ENCODE measurements at regions of chr4 and their contacts with region 1.

Region 1: DNA sequence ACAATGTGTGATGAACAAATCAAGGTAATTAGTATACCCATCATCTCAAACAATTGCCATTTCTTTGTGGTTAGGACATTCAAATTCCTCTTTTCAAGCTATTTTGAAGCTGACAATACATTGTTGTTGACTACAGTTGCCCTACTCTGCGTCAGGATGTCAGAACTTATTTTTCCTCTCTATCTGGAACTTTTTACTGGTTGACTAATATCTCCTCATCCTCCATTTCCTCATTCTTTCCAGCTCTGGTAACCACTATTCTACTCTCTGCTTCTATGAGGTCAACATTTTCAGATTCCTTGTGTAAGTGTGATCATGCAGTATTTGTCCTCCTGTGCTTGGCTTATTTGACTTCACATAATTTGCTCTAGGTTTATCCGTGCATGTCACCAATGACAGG is 240.5 kb upstream of the HS3ST1 start:
- DNase-seq: no peak
- H3K4me3 ChIP-seq: no peak overlapping the region
- H3K27ac ChIP-seq: no peak overlapping the region
- H3K4me1 ChIP-seq: no peaks in the 10 kb centered on the region
- H3K27me3 ChIP-seq: no peaks in the 10 kb centered on the region

Region 2: DNA sequence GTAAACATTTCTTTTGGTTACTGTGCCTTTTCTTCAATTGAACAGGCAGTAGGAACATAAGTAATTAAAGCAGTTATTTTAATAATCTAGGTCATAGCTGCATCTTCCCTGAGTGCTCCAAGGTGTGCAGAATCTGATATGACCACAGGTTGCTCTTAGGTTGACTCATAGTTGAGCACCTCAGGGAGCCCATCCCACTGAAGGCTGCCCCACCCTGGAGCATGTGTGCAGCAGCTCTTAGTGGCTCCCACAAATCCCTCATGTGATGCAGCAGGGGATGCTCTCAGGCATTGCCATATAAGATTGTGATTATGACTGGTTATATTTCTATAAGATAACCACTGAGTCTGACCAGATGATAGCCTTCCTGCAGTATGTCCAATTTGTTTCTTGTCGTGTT is 1284.2 kb before region 1 on chr4:
- CTCF ChIA-PET with region 1: no interaction called
- POLR2A ChIA-PET with region 1: interaction called, 10 read pairs
- DNase-seq: no peak
- H3K4me3 ChIP-seq: no peak overlapping the region
- H3K27ac ChIP-seq: no peak overlapping the region
- H3K4me1 ChIP-seq: no peaks in the 10 kb centered on the region
- H3K27me3 ChIP-seq: peaks cover 0 to 1% (median 0%) of the 10 kb centered on the region in 5 experiments

Region 3: DNA sequence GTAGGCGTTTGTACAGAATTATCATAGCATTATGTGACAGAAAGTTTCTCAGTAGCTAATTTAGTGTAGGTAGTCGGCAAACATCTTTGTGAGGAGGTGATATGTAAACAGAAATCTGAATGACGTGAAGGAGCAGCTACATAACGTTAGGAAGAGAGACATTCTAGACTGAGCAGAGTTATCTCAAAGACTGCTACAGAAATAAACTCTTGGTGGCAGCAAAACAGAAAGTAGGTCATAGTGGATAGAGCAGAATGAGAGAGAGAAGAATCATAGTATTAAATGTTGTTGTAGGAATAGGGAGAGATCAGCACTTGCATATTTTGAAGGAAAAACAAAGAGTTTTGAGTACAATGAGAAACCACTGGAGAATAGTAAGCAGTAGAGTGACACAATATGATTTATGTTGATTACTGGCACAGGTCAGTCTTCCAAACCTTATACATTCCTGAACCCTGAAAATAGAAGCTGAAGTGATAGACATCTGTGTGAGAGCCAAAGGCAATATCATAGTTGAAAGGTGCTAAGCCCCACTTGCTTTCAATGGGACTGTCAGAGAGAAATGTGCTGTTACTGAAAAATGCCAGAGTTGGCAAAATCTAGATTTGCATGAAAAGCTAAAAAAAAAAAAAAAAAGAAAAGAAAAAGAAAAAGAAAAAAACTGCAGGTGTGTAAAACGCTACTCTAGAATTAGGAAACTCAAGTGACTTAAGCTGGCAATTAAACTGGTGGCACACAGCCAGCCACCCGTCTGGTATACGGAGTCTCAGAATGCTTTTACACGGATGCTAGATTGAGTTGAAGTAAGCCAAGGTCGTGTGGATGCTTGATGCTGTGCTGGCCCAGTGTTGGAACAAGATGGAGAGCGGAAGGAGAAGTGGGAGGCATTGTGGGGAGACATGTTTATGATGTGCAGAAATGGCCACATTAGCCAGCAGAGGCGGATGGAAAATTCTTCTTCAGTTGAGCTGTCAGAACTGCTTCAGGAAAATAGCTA is 509.8 kb after region 1 on chr4:
- CTCF ChIA-PET with region 1: no interaction called
- POLR2A ChIA-PET with region 1: no interaction called
- DNase-seq: no peak
- H3K4me3 ChIP-seq: no peak overlapping the region
- H3K27ac ChIP-seq: no peak overlapping the region
- H3K4me1 ChIP-seq: no peaks in the 10 kb centered on the region
- H3K27me3 ChIP-seq: no peaks in the 10 kb centered on the region

Measured in common myeloid progenitor, CD34-positive (primary cell).